Dorsolateral prefrontal cortex (tissue), 120 donors: ENCODE measurements at regions of chr5 and their contacts with region 1.

Region 1: GRCh38 chr5:126536874-126537273 is 58.1 kb downstream of the ALDH7A1 start:
- DNase-seq: no peak
- H3K4me3 ChIP-seq: no peak overlapping the region
- H3K27ac ChIP-seq: peak overlapping the region in 20 of 59 donors; percentile 0 to 68 (median 33)
- H3K27me3 ChIP-seq: no peaks in the 10 kb centered on the region
- CTCF ChIP-seq: peak in 14 of 56 donors; percentile 5 to 34 (median 17)

Region 2: DNA sequence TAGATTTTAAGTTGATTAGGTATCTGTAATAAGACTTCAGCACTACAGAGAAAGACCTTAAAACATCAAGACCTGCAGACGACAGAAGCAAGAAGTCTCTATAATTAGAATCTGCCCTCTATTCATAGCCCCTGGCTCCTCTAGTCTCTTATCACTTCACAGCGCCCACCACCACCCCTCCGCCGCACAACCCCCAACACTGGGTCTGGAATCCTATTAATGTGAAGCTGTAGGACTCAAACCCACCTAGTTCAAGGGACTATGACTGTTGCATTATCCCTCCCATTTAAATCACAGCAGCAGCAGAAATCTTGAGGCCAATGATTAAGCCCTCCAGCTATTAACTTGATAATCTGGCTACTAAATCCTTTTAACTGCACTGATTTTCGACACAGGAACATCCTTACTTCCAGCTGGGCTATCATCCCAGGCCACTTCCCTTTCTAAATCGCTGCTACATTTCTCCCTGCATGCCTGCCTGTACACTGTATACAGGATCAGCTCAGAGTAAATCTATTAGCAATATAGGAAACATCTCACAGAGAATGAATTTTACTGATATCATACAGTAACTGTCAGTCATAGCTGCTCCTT is 273.2 kb before region 1 on chr5:
- intact Hi-C with region 1: no loop called
- DNase-seq: no peak
- H3K4me3 ChIP-seq: no peak overlapping the region
- H3K27ac ChIP-seq: no peak overlapping the region
- H3K27me3 ChIP-seq: no peaks in the 10 kb centered on the region
- CTCF ChIP-seq: no peak

Region 3: DNA sequence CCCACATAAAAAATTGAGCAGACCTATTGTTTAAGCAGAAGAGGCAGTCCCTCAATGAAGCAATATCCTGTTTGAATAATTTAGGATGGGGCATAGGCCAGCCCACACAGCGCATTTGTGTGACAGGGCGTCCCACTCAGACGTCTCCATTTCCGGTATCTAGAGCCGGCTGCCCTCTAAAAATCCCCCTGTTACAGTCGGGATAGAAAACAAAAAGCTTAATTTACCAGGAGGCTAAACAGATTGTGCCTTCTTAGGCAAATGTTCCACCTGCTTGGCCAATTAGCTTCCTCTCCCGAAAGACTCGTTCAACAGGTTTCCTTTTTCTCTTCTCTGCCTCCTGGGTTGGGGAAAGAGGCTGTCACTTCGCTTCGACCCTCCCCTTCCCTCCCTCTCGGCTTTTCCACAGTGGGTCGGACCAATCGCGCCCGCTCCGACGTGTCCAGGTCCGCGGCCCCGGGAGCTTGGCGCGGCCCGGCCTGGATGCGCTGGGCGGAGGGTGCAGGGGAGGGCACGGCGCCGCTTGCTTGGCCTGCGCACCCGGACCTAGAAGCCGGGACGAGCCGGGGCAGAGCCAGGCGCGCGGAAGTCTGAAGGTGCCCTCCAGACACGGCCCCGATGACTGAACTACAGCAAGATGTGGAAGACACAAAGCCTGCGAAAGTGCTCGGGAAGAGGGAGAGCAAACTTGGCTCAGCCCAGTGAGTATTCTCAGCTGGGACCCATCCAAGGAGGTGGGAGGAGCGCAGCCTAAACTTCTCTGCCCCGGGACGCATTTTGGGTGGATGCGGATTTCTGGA is 113.7 kb before region 1 on chr5 and contains the start of gene GRAMD2B:
- intact Hi-C with region 1: loop called in 1 of 2 experiments (anchors 5 kb)
- DNase-seq: peak; percentile 30 to 82 (median 68)
- H3K4me3 ChIP-seq: peak within 1 kb of the TSS; percentile 53 to 90 (median 74)
- H3K27ac ChIP-seq: peak within 1 kb of the TSS; percentile 77 to 98 (median 94)
- H3K27me3 ChIP-seq: no peaks in the 10 kb centered on the region
- CTCF ChIP-seq: peak in 8 of 56 donors; percentile 4 to 27 (median 12)
- total RNA-seq, gene GRAMD2B: 39.5 to 205 (median 86.4) TPM

Region 4: DNA sequence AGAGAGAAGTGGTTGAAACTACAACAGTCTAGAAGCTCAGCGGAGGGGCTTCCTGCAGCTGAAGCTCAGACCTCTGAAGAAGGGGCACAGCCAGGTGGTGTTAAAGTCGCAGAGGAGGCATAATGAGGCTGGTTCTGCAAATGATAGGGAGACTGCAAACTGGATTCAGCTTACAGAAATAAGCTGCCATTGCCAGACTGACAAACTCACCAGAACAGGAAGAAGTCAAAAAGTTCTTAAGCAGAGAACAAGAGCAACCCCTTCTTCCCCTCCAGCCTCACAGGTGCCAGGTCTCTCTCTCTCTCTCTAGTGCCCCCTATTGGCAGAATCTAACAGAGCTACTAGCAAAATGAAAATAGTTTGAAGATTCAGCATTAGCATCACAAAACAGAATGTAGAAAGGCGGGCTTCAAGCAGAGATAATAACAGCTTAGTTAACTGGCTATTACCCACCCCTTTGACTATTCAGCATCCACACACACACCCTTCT is 37.0 kb before region 1 on chr5:
- intact Hi-C with region 1: loop called in 1 of 2 experiments (anchors 5 kb)
- DNase-seq: no peak
- H3K4me3 ChIP-seq: no peak overlapping the region
- H3K27ac ChIP-seq: peak overlapping the region in 54 of 59 donors; percentile 5 to 85 (median 62)
- H3K27me3 ChIP-seq: no peaks in the 10 kb centered on the region
- CTCF ChIP-seq: peak in 55 of 56 donors; percentile 14 to 65 (median 49)

Region 5: DNA sequence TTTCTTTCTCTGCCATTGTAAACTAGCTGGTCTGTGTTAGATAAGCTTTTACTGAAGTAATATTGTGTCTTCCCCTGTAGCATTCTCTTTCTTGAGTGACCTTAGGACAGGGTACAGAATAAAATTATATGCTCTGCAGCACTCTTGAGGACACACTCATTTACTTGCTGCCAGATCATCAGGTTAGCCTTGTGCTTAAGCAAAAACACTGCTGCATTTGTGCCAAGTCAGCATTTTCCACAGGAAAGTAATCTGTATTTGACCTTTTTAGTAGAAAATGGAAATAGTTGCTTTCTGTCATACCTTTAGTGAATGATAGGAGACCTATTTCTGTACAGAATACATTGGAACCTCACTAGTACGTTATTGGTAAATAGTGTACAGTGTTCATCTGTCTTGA is 294.3 kb after region 1 on chr5:
- intact Hi-C with region 1: no loop called
- DNase-seq: no peak
- H3K4me3 ChIP-seq: no peak overlapping the region
- H3K27ac ChIP-seq: no peak overlapping the region
- H3K27me3 ChIP-seq: no peaks in the 10 kb centered on the region
- CTCF ChIP-seq: no peak